Transverse colon (tissue), 4 donors: ENCODE measurements at regions of chr2 and their contacts with region 1.

Region 1: GRCh38 chr2:45993476-45993991 is 303.7 kb upstream of the EPAS1 start:
- DNase-seq: peak; percentile 71
- H3K4me3 ChIP-seq: no peak overlapping the region
- H3K27ac ChIP-seq: peak overlapping the region in 3 of 4 donors; percentile 70 to 78 (median 77)
- H3K4me1 ChIP-seq: peaks cover 17 to 45% (median 27%) of the 10 kb centered on the region in 4 donors
- H3K27me3 ChIP-seq: no peaks in the 10 kb centered on the region
- CTCF ChIP-seq: peak; percentile 76 to 86 (median 83)
- EP300 ChIP-seq: no peak
- POLR2A ChIP-seq: no peak

Region 2: DNA sequence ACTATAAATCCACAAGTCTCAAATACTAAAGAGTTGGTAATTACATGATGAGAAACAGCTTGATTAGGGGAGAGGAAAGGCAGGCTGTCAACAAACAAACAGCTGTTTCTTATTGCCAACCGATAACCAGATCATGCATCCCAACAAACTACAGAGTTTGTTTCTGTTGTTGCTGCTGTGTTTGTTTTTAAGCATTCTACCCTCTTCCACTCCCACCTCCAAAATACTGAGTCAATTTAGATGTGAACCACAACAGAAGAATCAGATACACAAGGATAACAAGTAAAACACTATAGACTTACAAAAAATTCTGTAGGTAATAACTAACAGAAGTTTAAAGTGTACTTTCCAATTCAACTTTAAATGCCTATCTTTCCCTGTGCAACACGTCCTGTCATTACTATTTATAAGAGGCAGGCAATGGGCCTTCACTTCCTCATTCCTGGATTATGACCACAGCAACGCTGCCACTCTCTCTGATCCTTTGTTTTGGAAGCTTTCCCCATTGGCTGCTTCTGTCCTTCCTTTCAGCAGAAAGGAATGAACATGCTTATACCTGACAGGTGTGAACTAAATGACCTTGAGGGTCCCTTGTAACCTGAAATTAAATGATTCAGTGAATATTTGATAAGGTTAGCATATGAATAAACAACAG is 534.5 kb before region 1 on chr2:
- in situ Hi-C with region 1: no loop called
- intact Hi-C with region 1: no loop called
- DNase-seq: peak; percentile 26
- H3K4me3 ChIP-seq: no peak overlapping the region
- H3K27ac ChIP-seq: peak overlapping the region; percentile 23 to 75 (median 61)
- H3K4me1 ChIP-seq: peaks cover 0 to 24% (median 12%) of the 10 kb centered on the region in 4 donors
- H3K27me3 ChIP-seq: no peaks in the 10 kb centered on the region
- CTCF ChIP-seq: no peak
- EP300 ChIP-seq: no peak
- POLR2A ChIP-seq: no peak

Region 3: GRCh38 chr2:45872211-45872610 is 121.3 kb before region 1 on chr2:
- in situ Hi-C with region 1: no loop called
- intact Hi-C with region 1: no loop called
- DNase-seq: no peak
- H3K4me3 ChIP-seq: no peak overlapping the region
- H3K27ac ChIP-seq: no peak overlapping the region
- H3K4me1 ChIP-seq: peaks cover 0 to 12% (median 7%) of the 10 kb centered on the region in 4 donors
- H3K27me3 ChIP-seq: no peaks in the 10 kb centered on the region
- CTCF ChIP-seq: no peak
- EP300 ChIP-seq: no peak
- POLR2A ChIP-seq: no peak

Region 4: DNA sequence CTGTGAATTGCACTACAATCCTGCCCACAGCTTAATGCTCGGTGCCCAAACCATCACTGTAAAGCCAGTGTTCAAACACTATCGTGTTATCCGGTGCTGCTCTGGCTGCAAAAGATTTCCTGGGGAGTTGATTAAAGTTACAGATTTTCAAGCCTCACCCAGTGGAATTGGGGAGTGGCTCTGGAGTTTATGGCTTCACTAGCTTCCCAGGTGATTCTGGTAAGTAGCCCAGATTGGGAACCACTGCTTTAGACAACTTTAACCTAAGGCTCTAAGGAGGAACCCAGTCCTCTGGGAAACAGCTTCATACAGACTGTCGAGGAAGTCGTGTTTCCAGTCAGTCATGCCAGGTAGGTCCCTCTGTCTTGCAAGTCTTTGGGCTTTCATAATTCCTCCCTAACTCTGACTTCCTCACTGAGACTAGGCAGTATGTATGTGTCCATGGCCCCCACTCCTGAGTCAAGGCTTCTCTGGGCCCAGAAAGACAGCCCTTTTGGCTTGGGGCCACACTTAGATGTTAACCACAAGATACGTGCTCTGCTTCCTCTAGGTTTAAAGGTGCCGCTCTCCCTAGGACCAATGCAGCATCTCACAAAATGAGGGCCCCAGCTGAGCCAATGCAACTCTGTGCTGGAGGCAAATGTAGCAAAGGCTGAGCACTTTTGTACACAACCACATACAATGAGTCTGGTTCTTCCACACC is 42.4 kb before region 1 on chr2:
- in situ Hi-C with region 1: no loop called
- intact Hi-C with region 1: no loop called
- DNase-seq: no peak
- H3K4me3 ChIP-seq: no peak overlapping the region
- H3K27ac ChIP-seq: peak overlapping the region in 1 of 4 donors; percentile 4
- H3K4me1 ChIP-seq: peaks cover 0 to 12% (median 4%) of the 10 kb centered on the region in 4 donors
- H3K27me3 ChIP-seq: no peaks in the 10 kb centered on the region
- CTCF ChIP-seq: no peak
- EP300 ChIP-seq: no peak
- POLR2A ChIP-seq: no peak

Region 5: DNA sequence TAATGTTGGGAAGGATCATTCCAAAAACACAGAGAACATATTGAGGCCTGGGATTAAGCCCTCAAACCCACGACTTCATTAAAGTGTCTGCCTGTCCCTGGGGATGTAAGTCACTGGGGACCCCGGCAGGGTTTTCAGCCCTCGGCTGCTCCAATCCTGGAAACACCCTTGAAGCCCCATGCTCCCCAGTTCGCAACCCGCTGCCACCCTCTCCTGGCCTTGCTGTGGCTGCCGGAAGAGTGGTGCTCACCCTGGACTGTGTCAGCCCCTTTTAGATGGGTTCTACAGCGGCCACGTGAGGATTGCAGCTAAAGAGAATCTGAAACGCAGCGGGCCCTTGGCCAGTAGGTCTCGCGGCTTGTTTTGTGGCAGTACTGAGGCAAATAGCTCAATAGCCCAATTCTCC is 383.6 kb after region 1 on chr2:
- in situ Hi-C with region 1: no loop called
- intact Hi-C with region 1: loop called (anchors 10 kb)
- DNase-seq: no peak
- H3K4me3 ChIP-seq: no peak overlapping the region
- H3K27ac ChIP-seq: peak overlapping the region in 3 of 4 donors; percentile 7 to 43 (median 36)
- H3K4me1 ChIP-seq: peaks cover 0 to 16% (median 4%) of the 10 kb centered on the region in 4 donors
- H3K27me3 ChIP-seq: no peaks in the 10 kb centered on the region
- CTCF ChIP-seq: no peak
- EP300 ChIP-seq: no peak
- POLR2A ChIP-seq: no peak

Region 6: GRCh38 chr2:46451131-46451711 is 457.7 kb after region 1 on chr2:
- in situ Hi-C with region 1: loop called in 1 of 4 experiments (anchors 10 kb)
- intact Hi-C with region 1: no loop called
- DNase-seq: no peak
- H3K4me3 ChIP-seq: no peak overlapping the region
- H3K27ac ChIP-seq: no peak overlapping the region
- H3K4me1 ChIP-seq: no peaks in the 10 kb centered on the region
- H3K27me3 ChIP-seq: no peaks in the 10 kb centered on the region
- CTCF ChIP-seq: no peak
- EP300 ChIP-seq: no peak
- POLR2A ChIP-seq: no peak